ENCODE measurements at regions of chr15 and their contacts with region 1.

Region 1: DNA sequence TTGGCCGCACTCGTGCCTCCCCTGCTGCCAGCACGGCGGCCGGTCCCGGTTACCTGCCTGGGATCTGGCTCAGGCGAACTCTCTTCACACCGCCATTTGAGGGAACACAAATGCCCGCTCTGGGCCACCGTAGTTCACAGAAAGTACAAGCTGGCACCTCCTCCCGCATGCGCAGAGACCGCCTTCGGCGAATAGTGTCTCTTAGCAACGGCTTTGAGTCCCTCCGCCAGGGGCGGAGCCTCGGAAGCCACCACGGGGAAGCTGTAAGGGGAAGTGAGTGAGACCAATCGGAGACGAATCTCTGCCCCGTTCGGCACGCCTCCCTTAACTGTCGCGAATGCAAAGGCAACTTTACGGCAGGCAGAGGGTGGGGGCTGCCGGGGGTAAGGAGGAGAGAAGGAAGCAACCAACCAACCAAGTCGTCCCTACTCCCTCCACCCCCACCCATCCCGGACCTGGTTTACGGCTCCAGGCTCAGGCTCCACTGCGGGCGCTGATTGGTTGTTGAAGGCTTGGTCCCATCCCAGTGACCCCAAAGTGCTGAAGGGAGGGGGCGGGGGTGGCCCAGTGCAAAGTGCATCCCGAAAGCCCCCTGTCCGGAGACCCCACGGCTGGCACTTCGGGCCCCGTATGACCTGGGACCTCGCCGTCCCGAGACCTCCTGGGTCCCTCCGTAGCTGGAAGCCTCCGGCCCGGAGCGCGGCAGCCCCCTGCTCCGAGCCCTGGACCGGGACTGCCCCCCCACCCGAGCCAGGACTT is at the starts of genes ASB7 and LINS1:
- DNase-seq: peak; percentile 100
- total RNA-seq, gene ASB7: 6.8 TPM
- total RNA-seq, gene LINS1: 9.7 TPM

Region 2: GRCh38 chr15:100661156-100661555 is 58.9 kb after region 1 on chr15:
- intact Hi-C with region 1: no loop called
- DNase-seq: no peak

Region 3: DNA sequence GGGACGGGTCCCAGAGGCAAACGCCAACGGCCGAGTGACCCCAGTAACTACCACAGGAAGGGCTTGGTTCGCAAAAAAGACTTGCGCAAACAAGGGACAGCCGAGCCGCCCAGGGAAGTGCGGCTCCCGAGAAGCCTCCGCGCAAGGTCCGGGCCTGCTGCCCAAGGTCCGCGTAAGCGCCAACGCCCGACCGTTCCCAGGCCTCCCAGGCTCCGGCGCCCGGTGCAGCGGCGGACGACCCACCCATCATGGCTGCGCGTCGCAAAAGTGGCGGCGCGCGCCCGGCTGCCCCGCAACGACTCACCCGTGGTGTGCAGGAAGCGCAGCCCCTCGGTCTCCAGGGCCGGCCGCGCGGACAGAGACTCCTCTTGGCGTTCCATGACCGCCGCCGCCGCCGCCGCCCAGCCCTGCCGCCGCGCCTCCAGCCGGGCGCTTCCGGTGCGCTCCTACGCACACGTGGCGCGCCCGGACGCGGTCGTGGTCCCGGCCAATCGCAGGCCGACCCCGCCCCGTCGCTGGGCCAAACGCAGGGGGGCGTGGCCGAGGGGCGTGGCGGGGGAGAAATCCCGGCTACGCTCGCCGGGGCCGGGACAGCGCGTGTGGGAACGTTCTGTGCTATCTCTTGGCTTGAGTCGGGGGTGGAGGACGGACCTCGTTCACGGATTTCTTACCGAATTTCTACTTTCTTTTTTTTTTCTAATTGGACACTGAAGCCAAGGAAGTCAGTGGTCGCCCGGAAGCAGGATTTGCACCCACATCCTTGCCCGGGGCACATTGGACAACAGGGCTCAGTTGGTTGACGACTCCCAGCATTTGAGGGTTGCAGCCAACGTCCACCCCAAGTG is 675.0 kb after region 1 on chr15 and contains the start of gene SELENOS:
- intact Hi-C with region 1: loop called (anchors 10 kb)
- DNase-seq: peak; percentile 95
- total RNA-seq, gene SELENOS: 51.6 TPM

Measured in cardiac septum (tissue), 1 donor.